PC-3 (cell line): ENCODE measurements at regions of chr3 and their contacts with region 1.

Region 1: GRCh38 chr3:71057526-71057894 is 526.0 kb downstream of the FOXP1 start:
- DNase-seq: peak; percentile 87
- ATAC-seq: peak; percentile 41
- H3K4me3 ChIP-seq: peak overlapping the region; percentile 58
- H3K27ac ChIP-seq: peak overlapping the region; percentile 93
- H3K4me1 ChIP-seq: peaks cover 84% of the 10 kb centered on the region
- H3K27me3 ChIP-seq: no peaks in the 10 kb centered on the region
- CTCF ChIP-seq: no peak

Region 2: GRCh38 chr3:71026634-71027578 is 30.6 kb before region 1 on chr3:
- CTCF ChIA-PET with region 1: interaction called, 3 read pairs
- POLR2A ChIA-PET with region 1: interaction called, 4 read pairs
- intact Hi-C with region 1: loop called (anchors 2 kb)
- DNase-seq: peak; percentile 73
- ATAC-seq: peak; percentile 83
- H3K4me3 ChIP-seq: no peak overlapping the region
- H3K27ac ChIP-seq: peak overlapping the region; percentile 77
- H3K4me1 ChIP-seq: peaks cover 44% of the 10 kb centered on the region
- H3K27me3 ChIP-seq: no peaks in the 10 kb centered on the region
- CTCF ChIP-seq: no peak

Region 3: DNA sequence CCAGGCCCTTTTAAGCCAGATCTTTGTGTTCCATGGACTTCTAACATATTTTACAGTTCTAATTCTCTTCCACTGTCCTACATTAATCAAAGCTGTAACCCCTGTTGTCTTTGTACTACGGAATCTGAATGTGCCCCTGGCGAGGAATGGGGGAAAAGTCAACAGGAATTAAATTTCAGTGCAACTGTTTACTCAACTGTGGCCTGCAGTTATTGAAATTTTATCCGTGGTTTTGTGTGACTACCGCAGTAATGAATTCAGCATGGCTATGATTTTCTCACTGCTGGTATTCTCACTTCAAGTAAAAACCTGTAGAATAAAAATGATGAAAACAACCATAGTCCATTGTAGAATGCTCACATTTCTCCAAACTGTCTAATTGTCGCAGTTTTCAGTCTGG is 138.0 kb after region 1 on chr3:
- CTCF ChIA-PET with region 1: no interaction called
- POLR2A ChIA-PET with region 1: no interaction called
- intact Hi-C with region 1: no loop called
- DNase-seq: peak; percentile 89
- ATAC-seq: peak; percentile 95
- H3K4me3 ChIP-seq: no peak overlapping the region
- H3K27ac ChIP-seq: peak overlapping the region; percentile 59
- H3K4me1 ChIP-seq: peaks cover 35% of the 10 kb centered on the region
- H3K27me3 ChIP-seq: no peaks in the 10 kb centered on the region
- CTCF ChIP-seq: no peak